ENCODE measurements at regions of chr17 and their contacts with region 1.

Region 1: DNA sequence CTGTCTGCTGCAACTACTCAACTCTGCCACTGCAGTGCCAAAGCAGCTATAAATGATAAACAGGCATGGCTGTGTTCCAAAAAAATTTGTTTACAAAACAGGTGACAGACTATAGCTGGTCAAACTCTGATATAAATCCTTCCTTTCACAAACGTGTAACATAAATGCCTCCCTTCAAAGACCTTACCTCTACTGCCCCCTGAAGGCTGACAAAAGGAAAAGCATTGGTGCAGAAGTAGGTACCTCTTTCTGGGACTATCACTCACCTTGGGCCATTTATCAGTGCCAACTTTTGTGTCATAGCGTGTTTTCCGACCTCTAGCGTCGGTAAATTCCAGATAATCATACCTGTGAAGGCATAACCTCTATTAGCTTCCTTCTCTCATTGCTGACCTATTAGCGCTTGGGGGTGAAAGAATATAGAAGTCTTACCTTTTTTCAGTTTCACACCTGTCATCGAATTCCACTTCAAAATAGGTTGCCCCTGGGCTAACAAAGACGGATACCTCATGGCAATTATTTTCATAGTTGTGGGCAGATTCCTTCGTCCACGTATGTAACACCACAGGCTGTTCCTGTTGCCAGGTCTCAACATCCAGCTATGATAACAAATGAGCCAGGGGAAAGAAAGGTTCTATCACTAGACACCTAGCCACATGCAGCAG is 67.9 kb downstream of the ZZEF1 start:
- DNase-seq: peak; percentile 25
- ATAC-seq: peak; percentile 68
- H3K4me3 ChIP-seq: peak overlapping the region; percentile 24; the same call in 1 of the 2 replicates
- H3K27ac ChIP-seq: peak overlapping the region; percentile 77
- H3K4me1 ChIP-seq: peaks cover 33% of the 10 kb centered on the region
- H3K27me3 ChIP-seq: no peaks in the 10 kb centered on the region
- CTCF ChIP-seq: peak; percentile 77 to 82 (median 79)
- EP300 ChIP-seq: no peak
- POLR2A ChIP-seq: no peak
- RAD21 ChIP-seq: peak; percentile 79

Region 2: GRCh38 chr17:3865176-3865575 is 209.8 kb before region 1 on chr17:
- CTCF ChIA-PET with region 1: interaction called, 8 read pairs
- POLR2A ChIA-PET with region 1: interaction called, 3 read pairs
- RAD21 ChIA-PET with region 1: interaction called, 4 read pairs
- SMC1A ChIA-PET with region 1: interaction called, 15 read pairs
- in situ Hi-C with region 1: no loop called
- intact Hi-C with region 1: loop called (anchors 1 kb)
- DNase-seq: no peak
- ATAC-seq: no peak
- H3K4me3 ChIP-seq: no peak overlapping the region
- H3K27ac ChIP-seq: no peak overlapping the region
- H3K4me1 ChIP-seq: no peaks in the 10 kb centered on the region
- H3K27me3 ChIP-seq: no peaks in the 10 kb centered on the region
- CTCF ChIP-seq: no peak
- EP300 ChIP-seq: no peak
- POLR2A ChIP-seq: no peak
- RAD21 ChIP-seq: no peak

Region 3: DNA sequence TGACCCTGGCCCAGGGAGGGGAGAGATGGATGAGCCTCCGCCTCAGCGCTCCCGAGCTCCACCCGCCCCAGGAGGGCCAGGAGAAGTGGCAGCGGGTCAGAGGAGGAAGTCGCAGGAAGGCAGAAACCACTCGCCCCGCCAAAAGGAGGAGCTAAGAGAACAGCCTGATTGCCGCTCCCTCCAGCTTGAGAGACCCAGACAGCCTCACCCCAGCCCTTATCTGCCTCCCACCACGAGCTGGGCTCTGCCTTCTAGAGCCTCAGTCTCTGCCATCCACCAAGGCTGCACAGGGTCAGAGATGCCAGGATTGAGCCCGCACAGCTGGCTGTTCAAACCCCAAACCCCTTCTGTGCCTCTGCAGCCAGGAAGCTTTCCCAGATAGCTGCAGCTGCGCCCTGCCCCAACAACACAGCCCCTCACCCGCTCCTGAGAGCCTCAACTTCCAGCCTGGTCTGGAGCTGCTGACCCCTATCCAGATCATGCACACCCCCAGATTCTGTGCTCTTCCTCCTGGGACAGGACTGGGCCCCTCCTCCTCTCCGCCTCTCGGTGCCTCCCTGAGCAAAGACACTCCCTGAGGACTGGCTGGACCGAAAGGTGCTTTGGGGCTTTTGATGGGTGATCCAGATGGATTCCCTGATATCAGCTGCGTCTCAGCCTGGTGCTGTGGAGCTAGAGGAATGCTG is 109.7 kb before region 1 on chr17:
- CTCF ChIA-PET with region 1: interaction called, 20 read pairs
- POLR2A ChIA-PET with region 1: interaction called, 4 read pairs
- RAD21 ChIA-PET with region 1: interaction called, 17 read pairs
- SMC1A ChIA-PET with region 1: interaction called, 14 read pairs
- in situ Hi-C with region 1: no loop called
- intact Hi-C with region 1: loop called (anchors 2 kb)
- DNase-seq: peak; percentile 33
- ATAC-seq: peak; percentile 79
- H3K4me3 ChIP-seq: peak overlapping the region; percentile 90
- H3K27ac ChIP-seq: peak overlapping the region; percentile 62
- H3K4me1 ChIP-seq: peaks cover 44% of the 10 kb centered on the region
- H3K27me3 ChIP-seq: no peaks in the 10 kb centered on the region
- CTCF ChIP-seq: peak in 1 of 3 experiments; percentile 50; a peak in 2 of 6 replicates
- EP300 ChIP-seq: no peak
- POLR2A ChIP-seq: peak; percentile 85
- RAD21 ChIP-seq: no peak

Region 4: DNA sequence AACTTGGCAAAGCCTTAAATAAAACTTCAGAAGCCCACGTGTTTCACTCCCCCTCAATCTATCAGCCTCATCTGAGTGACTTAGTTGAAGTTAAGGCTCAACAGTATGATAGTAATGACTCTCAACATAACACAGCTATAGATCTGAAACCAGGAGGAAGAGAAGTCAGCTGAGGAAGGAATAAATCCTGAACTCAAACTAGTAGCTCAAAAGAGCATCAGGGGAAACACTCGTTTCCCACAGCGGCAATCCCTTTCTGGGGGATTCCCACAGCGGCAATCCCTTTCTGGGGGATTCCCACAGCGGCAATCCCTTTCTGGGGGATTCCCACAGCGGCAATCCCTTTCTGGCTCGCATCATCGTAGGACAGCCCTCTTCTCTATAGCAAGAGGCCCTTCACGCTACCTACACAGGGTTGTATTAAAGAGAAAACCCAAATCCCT is 11.1 kb after region 1 on chr17:
- CTCF ChIA-PET with region 1: interaction called, 18 read pairs
- POLR2A ChIA-PET with region 1: interaction called, 4 read pairs
- RAD21 ChIA-PET with region 1: interaction called, 12 read pairs
- SMC1A ChIA-PET with region 1: interaction called, 4 read pairs
- in situ Hi-C with region 1: no loop called
- intact Hi-C with region 1: no loop called
- DNase-seq: peak; percentile 36
- ATAC-seq: peak; percentile 97
- H3K4me3 ChIP-seq: peak overlapping the region; percentile 7; the same call in 1 of the 2 replicates
- H3K27ac ChIP-seq: peak overlapping the region; percentile 67
- H3K4me1 ChIP-seq: peaks cover 14% of the 10 kb centered on the region
- H3K27me3 ChIP-seq: no peaks in the 10 kb centered on the region
- CTCF ChIP-seq: no peak
- EP300 ChIP-seq: no peak
- POLR2A ChIP-seq: no peak
- RAD21 ChIP-seq: no peak

Region 5: GRCh38 chr17:4143563-4144421 is 68.8 kb after region 1 on chr17:
- CTCF ChIA-PET with region 1: interaction called, 6 read pairs
- POLR2A ChIA-PET with region 1: no interaction called
- RAD21 ChIA-PET with region 1: no interaction called
- SMC1A ChIA-PET with region 1: no interaction called
- in situ Hi-C with region 1: no loop called
- intact Hi-C with region 1: loop called (anchors 2 kb)
- DNase-seq: peak; percentile 71
- ATAC-seq: peak; percentile 88
- H3K4me3 ChIP-seq: peak overlapping the region; percentile 78
- H3K27ac ChIP-seq: peak overlapping the region; percentile 96
- H3K4me1 ChIP-seq: peaks cover 12% of the 10 kb centered on the region
- H3K27me3 ChIP-seq: no peaks in the 10 kb centered on the region
- CTCF ChIP-seq: no peak
- EP300 ChIP-seq: no peak
- POLR2A ChIP-seq: peak; percentile 91
- RAD21 ChIP-seq: no peak

Measured in GM12878 (cell line).